Lower leg skin (tissue), 4 donors: ENCODE measurements at regions of chr12 and their contacts with region 1.

Region 1: GRCh38 chr12:98296462-98297079 is 218.8 kb upstream of the TMPO start:
- DNase-seq: no peak
- H3K4me3 ChIP-seq: no peak overlapping the region
- CTCF ChIP-seq: no peak
- POLR2A ChIP-seq: no peak

Region 2: GRCh38 chr12:97875064-97875463 is 421.5 kb before region 1 on chr12:
- intact Hi-C with region 1: no loop called
- DNase-seq: no peak
- H3K4me3 ChIP-seq: no peak overlapping the region
- CTCF ChIP-seq: no peak
- POLR2A ChIP-seq: no peak

Region 3: GRCh38 chr12:98319716-98320425 is 23.3 kb after region 1 on chr12:
- intact Hi-C with region 1: loop called (anchors 1 kb)
- DNase-seq: no peak
- H3K4me3 ChIP-seq: no peak overlapping the region
- CTCF ChIP-seq: no peak
- POLR2A ChIP-seq: no peak